ENCODE measurements at regions of chr11 and their contacts with region 1.

Region 1: GRCh38 chr11:62601394-62602140 is at the start of gene MTA2:
- DNase-seq: peak; percentile 100
- ATAC-seq: peak; percentile 89
- H3K4me3 Mint-ChIP-seq: peak within 1 kb of the TSS; percentile 91
- H3K27ac Mint-ChIP-seq: peak within 1 kb of the TSS; percentile 96
- H3K4me1 Mint-ChIP-seq: peaks cover 51% of the 10 kb centered on the region
- H3K27me3 Mint-ChIP-seq: no peaks in the 10 kb centered on the region
- total RNA-seq, gene MTA2: 159 to 179 TPM

Region 2: DNA sequence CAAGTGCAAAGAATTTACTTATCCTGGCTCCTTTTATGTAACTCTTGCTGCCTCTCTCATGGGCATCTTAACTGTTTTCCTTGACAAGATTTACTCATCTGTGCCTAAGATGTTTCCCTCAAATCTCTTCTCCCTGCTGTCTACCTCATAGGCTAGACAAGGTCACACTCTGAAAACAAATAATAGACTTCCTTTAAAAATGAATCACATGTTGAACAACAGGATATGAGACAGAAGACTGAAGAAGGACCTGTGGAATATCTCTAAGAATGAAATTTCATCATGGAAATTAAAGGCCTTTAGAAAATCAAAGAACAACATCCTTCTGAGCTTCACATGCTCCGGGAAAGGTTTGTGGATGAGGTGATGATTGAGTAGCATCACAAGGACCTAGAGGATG is 337.6 kb before region 1 on chr11:
- CTCF ChIA-PET with region 1: no interaction called
- POLR2A ChIA-PET with region 1: no interaction called
- intact Hi-C with region 1: no loop called
- DNase-seq: no peak
- ATAC-seq: peak; percentile 28
- H3K4me3 Mint-ChIP-seq: no peak overlapping the region
- H3K27ac Mint-ChIP-seq: no peak overlapping the region
- H3K4me1 Mint-ChIP-seq: peaks cover 36% of the 10 kb centered on the region
- H3K27me3 Mint-ChIP-seq: peaks cover 16% of the 10 kb centered on the region

Region 3: DNA sequence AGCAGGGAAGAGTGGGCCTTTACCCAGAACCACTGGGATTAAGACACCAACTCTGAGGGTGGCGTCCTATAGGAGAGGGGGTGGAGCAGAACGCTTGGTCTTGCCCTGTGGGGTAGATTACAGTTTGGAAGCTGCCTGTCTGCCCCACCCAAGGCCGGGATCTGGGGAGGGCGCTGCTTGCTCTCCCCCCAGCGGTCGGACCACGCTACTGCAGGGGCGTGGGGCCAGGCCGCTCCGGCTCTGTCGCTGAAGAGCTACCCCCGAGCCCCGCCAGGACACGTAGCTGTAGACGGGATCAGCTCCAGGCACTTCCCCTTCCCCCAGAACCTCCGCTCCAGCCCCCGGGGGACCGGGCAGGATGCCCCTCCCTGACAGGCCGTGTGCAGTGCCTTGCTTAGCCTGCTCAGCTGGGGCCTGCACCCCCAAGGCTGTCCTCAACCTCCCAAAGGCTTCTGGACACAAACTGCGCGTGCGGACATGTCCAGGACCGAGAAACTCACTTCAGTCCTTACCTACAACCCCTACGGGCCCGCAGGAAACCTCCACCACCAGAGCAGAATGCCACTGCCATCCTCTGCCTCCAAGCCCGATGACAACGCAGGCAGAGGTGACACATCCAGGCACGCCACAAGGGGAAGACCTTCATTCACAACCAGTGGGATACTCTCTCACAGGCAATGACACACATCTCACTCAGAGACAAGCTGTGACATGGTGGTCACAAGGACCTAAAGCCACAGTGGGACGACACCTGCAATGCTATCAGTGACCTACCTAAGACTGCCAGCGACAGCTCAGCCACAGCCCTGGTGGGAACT is 58.6 kb before region 1 on chr11:
- CTCF ChIA-PET with region 1: no interaction called
- POLR2A ChIA-PET with region 1: no interaction called
- intact Hi-C with region 1: no loop called
- DNase-seq: peak; percentile 84
- ATAC-seq: peak; percentile 67
- H3K4me3 Mint-ChIP-seq: peak overlapping the region; percentile 83
- H3K27ac Mint-ChIP-seq: peak overlapping the region; percentile 58
- H3K4me1 Mint-ChIP-seq: peaks cover 80% of the 10 kb centered on the region
- H3K27me3 Mint-ChIP-seq: peaks cover 3% of the 10 kb centered on the region

Region 4: DNA sequence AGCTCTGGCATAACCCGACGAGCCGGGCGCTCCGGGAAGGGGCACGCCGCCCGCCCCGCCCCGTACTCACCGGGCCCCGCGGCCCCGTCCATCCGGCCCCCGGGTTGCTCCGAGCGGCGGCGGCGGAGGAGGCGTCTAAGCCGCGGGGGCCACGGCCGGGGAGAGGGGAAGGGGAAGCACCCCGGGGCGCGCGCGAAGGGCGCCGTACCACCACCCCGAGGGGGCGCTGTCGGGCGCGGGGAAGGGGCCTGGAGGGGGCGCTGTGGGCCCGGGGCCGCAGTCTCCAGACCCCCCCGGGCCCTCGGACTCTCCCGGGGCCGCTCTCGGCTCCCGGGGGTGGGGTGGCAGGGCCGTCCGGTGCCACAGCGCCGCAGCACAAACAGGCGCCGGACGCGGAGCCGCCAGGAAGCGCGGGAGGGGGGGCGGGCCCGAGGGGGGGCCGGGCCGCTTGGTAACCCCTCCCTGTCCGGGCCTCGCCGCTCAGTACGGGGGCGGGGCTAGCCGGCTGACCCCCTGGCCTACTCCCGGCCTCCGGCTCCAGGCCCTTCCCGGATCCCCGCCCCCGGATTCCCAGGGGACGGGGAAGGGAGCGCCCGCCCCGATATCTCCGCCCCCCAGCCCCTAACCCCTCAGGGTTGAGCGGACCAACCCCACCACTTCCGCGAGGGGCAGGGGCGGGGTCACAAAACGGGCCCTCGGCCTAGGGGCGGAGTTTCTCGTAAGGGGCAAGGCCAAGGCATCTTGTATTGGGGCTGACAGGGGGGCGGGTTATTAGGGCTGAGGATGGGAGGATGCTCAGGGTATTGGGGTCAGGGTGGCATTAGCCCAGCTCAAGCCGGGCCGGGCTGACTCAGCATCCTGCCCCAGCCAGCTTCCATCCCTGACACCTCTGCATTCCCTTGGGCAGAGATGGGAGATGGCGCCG is 11.1 kb after region 1 on chr11 and contains the starts of genes EML3 and ROM1:
- CTCF ChIA-PET with region 1: interaction called, 18 read pairs
- POLR2A ChIA-PET with region 1: interaction called, 11 read pairs
- intact Hi-C with region 1: loop called (anchors 1 kb)
- DNase-seq: peak; percentile 91
- ATAC-seq: peak; percentile 78
- H3K4me3 Mint-ChIP-seq: peak within 1 kb of the TSS; percentile 91
- H3K27ac Mint-ChIP-seq: peak within 1 kb of the TSS; percentile 90
- H3K4me1 Mint-ChIP-seq: peaks cover 37% of the 10 kb centered on the region
- H3K27me3 Mint-ChIP-seq: no peaks in the 10 kb centered on the region
- total RNA-seq, gene EML3: 101 to 112 TPM
- total RNA-seq, gene ROM1: 1.5 to 1.9 TPM

Region 5: GRCh38 chr11:62645956-62646824 is 44.6 kb after region 1 on chr11 and contains the start of gene GANAB:
- CTCF ChIA-PET with region 1: interaction called, 4 read pairs
- POLR2A ChIA-PET with region 1: interaction called, 3 read pairs
- intact Hi-C with region 1: loop called in 1 of 2 experiments (anchors 1 kb)
- DNase-seq: peak; percentile 100
- ATAC-seq: peak; percentile 99
- H3K4me3 Mint-ChIP-seq: peak within 1 kb of the TSS; percentile 93
- H3K27ac Mint-ChIP-seq: peak within 1 kb of the TSS; percentile 93
- H3K4me1 Mint-ChIP-seq: peaks cover 34% of the 10 kb centered on the region
- H3K27me3 Mint-ChIP-seq: no peaks in the 10 kb centered on the region
- total RNA-seq, gene GANAB: 208 to 218 TPM

Region 6: GRCh38 chr11:62678770-62679696 is 77.5 kb after region 1 on chr11 and contains the start of gene UBXN1:
- CTCF ChIA-PET with region 1: no interaction called
- POLR2A ChIA-PET with region 1: no interaction called
- intact Hi-C with region 1: loop called in 1 of 2 experiments (anchors 2 kb)
- DNase-seq: peak; percentile 93
- ATAC-seq: peak; percentile 88
- H3K4me3 Mint-ChIP-seq: peak within 1 kb of the TSS; percentile 82
- H3K27ac Mint-ChIP-seq: peak within 1 kb of the TSS; percentile 92
- H3K4me1 Mint-ChIP-seq: peaks cover 28% of the 10 kb centered on the region
- H3K27me3 Mint-ChIP-seq: no peaks in the 10 kb centered on the region
- total RNA-seq, gene UBXN1: 95.6 to 119 TPM